GM10248 (cell line): ENCODE measurements at regions of chr3 and their contacts with region 1.

Region 1: DNA sequence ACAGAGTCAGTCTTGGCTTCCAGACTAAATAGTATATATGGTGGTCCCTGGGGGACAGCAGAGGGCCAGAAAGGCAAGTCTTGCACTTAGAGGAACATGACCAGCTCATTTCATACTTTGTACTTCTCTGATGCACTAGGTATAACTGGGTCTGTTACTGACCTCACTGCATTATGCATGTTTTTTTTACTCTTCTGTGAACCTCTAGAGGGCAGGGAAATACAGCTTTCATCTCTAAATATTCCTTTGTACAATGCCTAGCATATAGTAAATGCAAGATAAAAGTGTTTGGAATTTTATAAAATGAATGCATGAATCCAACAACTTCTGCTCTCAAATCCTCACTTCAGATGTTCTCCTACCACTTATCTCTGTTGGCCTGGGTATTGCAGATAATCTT is 23.4 kb upstream of the ARL14 start:
- DNase-seq: no peak
- CTCF ChIP-seq: peak; percentile 19

Region 2: GRCh38 chr3:160665784-160666526 is 12.4 kb after region 1 on chr3:
- CTCF ChIA-PET with region 1: interaction called, 16 read pairs
- POLR2A ChIA-PET with region 1: no interaction called
- DNase-seq: peak; percentile 31
- CTCF ChIP-seq: no peak